Mucosa of descending colon (tissue), 3 donors: ENCODE measurements at regions of chr3 and their contacts with region 1.

Region 1: GRCh38 chr3:53122933-53123305 is 7.3 kb downstream of the RFT1 start:
- DNase-seq: no peak
- ATAC-seq: no peak
- H3K4me3 ChIP-seq: no peak overlapping the region
- H3K4me1 ChIP-seq: no peaks in the 10 kb centered on the region
- CTCF ChIP-seq: no peak

Region 2: DNA sequence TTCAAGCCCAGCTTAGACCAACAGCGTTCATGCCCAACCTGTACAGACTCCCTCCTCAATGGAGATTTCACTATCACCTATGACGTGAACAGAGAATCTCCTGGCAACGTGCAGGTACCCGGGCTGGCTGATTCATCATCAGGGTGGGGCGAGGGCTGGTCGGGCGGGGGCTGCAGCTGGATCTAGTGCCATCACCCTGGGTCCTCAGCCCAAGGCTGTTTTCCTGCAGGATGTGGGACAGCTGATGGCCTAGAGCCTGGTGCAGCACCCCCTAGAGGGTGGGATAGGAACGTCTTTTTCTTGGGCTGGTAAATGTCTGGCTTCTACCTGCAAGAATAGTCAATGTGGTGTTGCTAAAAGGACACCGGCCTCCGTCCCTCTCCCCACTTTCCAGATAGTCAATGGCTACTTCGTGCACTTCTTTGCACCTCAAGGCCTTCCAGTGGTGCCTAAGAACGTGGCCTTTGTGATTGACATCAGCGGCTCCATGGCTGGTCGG is 323.9 kb before region 1 on chr3:
- intact Hi-C with region 1: no loop called
- DNase-seq: peak in 1 of 3 donors; percentile 23
- ATAC-seq: peak; percentile 63
- H3K4me3 ChIP-seq: no peak overlapping the region
- H3K4me1 ChIP-seq: no peaks in the 10 kb centered on the region
- CTCF ChIP-seq: peak; percentile 45

Region 3: DNA sequence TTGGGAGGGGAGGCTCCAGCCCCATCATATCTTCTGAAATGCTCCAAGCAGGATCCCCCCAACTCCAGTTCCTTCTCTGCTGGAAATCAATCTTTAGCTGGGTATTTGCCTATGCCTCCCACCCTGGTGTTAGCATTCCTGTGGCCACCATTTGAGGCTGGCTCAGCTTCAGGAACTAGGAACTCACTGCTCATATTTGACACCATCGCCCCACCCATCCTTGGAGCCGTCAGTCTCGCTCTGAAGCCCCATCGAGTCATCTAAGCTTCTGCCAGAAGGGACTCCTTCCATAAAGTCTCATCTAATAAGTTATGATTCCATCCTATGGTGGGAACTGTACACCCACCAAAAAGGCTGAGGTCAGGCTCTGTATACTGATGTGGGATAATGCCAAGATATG is 64.5 kb after region 1 on chr3:
- intact Hi-C with region 1: loop called in 1 of 2 experiments (anchors 5 kb)
- DNase-seq: peak in 1 of 3 donors; percentile 17
- ATAC-seq: no peak
- H3K4me3 ChIP-seq: no peak overlapping the region
- H3K4me1 ChIP-seq: peaks cover 6% of the 10 kb centered on the region
- CTCF ChIP-seq: no peak

Region 4: DNA sequence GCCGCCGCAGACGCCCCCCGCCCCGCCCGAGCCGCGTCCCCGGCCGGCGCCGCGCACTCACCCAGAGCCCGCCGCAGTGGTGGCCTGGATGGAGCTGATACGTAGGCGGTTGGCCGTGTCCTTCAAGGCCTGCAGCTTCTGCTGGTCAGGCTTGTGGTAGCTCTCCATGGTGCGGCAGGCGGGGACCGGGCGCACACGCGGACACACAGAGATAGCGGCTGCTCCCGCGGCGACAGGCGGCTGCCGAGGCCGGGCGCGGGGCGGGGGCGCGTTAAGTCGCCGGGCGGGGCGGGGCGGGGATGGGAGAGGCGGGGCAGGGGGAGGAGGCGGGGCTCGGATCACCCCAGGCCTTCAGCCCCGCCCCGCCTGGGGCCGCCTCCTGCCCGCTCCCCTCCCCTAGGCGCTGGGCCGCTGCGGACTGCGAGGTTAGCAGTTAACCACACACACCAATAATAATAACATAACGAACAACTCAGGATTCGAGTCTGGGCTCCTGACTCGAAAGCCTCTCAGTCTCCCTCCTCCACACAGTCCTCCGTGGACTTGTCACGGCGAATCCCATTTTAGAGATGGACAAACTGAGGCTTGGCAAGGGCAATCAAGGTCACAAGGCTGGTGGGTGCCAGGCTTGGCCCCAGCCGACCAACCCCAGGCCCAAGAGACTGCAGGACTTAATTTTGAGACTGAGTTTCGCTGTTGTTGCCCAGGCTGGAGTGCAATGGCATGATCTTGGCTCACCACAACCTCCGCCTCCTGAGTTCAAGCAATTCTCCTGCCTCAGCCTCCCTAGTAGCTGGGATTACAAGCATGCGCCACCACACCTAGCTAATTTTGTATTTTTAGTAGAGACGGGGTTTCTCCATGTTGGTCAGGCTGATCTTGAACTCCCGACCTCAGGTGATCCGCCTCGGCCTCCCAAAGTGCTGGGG is 133.1 kb after region 1 on chr3 and contains the start of gene TKT:
- intact Hi-C with region 1: no loop called
- DNase-seq: peak; percentile 93
- ATAC-seq: peak; percentile 87
- H3K4me3 ChIP-seq: peak within 1 kb of the TSS; percentile 78
- H3K4me1 ChIP-seq: peaks cover 22% of the 10 kb centered on the region
- CTCF ChIP-seq: no peak
- total RNA-seq, gene TKT: 180 to 260 (median 226) TPM

Region 5: GRCh38 chr3:53328746-53329145 is 205.8 kb after region 1 on chr3:
- intact Hi-C with region 1: no loop called
- DNase-seq: no peak
- ATAC-seq: no peak
- H3K4me3 ChIP-seq: no peak overlapping the region
- H3K4me1 ChIP-seq: no peaks in the 10 kb centered on the region
- CTCF ChIP-seq: no peak

Region 6: DNA sequence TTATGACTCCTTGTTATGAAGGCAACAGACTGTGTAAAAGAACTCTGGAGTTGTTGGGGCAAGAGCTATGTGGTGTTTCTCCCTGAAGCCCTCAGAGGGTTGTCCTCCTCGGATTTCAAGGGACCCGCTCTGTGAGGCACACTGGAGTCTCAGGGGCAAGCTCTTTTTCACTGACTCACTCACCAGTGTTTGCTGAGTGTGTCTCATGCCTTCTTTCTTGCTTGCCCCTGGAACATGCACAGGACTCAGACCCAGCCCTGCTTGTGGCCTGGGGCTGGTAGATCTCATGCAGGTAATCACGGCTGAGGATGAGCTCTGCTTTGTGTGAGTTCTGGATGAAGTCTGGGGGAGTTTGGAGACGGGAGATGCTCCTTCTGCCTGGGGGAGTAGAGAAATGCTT is 465.2 kb after region 1 on chr3:
- intact Hi-C with region 1: no loop called
- DNase-seq: no peak
- ATAC-seq: no peak
- H3K4me3 ChIP-seq: no peak overlapping the region
- H3K4me1 ChIP-seq: no peaks in the 10 kb centered on the region
- CTCF ChIP-seq: no peak